Dorsolateral prefrontal cortex (tissue), 120 donors: ENCODE measurements at regions of chr15 and their contacts with region 1.

Region 1: DNA sequence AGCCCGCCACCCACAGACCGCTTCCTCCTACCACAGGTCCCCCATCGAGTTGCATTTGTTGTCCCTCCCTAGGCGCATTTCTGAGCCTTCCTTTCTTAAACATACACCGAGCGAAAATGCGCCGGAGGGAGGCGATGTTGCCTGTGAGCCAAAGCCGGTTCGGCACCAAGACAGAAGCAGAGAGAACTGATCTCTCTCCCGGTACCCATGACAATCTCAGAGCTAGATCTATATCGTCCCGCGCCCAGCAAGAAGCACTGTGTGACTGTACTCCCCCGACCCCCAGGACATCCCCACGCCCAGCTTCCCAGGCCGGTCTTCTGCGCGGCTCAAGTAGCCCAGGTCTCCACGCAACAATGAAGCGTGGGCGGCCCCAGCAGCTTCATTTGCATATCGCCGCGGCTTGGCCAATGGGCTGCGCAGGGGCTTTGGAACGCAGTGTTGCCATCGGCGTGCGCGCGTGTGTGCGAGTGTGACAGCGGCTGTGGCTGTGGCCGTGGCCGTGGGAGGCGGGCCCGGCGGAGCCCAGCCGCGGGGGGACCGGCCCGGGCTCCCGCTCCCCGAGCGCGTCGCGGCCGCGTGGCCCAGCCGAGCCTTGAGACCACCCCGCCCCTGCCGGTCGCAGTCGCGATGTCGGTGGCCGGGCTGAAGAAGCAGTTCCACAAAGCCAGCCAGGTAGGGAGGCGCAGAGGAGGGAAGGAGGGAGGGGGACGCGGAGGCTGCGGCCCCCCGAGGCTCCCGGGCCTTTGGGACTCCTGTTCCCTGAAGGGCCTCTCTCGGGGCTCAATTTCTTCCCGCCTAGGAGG is at the start of gene SH3GL3:
- DNase-seq: peak; percentile 90 to 96 (median 94)
- H3K4me3 ChIP-seq: peak within 1 kb of the TSS; percentile 59 to 96 (median 82)
- H3K27ac ChIP-seq: peak within 1 kb of the TSS; percentile 49 to 98 (median 94)
- H3K27me3 ChIP-seq: peaks cover 0 to 7% (median 0%) of the 10 kb centered on the region in 45 donors
- CTCF ChIP-seq: peak in 55 of 56 donors; percentile 55 to 86 (median 73)
- total RNA-seq, gene SH3GL3: 52.3 to 210 (median 91.0) TPM

Region 2: GRCh38 chr15:83372420-83372891 is 74.7 kb before region 1 on chr15:
- intact Hi-C with region 1: no loop called
- DNase-seq: peak in 3 of 10 donors; percentile 16 to 47 (median 36)
- H3K4me3 ChIP-seq: no peak overlapping the region
- H3K27ac ChIP-seq: no peak overlapping the region
- H3K27me3 ChIP-seq: peaks cover 0 to 63% (median 32%) of the 10 kb centered on the region in 45 donors
- CTCF ChIP-seq: peak in 4 of 56 donors; percentile 5 to 18 (median 9)

Region 3: GRCh38 chr15:83475551-83475950 is 28.4 kb after region 1 on chr15:
- intact Hi-C with region 1: no loop called
- DNase-seq: no peak
- H3K4me3 ChIP-seq: no peak overlapping the region
- H3K27ac ChIP-seq: peak overlapping the region in 50 of 59 donors; percentile 5 to 95 (median 78)
- H3K27me3 ChIP-seq: no peaks in the 10 kb centered on the region
- CTCF ChIP-seq: no peak

Region 4: DNA sequence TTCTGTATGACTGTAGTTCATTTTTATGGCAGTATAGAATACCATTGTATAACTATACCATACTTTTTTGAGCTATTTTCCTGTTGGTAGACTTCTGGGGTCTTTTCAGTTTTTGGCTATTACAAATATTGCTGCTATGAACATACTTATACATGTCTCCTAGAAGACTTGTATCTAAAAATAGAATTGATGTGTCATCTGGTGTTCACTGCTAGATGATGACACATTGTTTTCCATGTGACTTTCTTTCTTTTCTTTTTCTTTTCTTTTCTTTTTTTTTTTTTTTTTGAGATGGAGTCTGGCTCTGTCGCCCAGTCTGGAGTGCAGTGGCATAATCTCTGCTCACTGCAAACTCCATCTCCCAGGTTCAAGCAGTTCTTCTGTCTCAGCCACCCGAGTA is 69.8 kb after region 1 on chr15:
- intact Hi-C with region 1: loop called (anchors 5 to 10 kb)
- DNase-seq: no peak
- H3K4me3 ChIP-seq: no peak overlapping the region
- H3K27ac ChIP-seq: peak overlapping the region in 47 of 59 donors; percentile 0 to 98 (median 67)
- H3K27me3 ChIP-seq: no peaks in the 10 kb centered on the region
- CTCF ChIP-seq: no peak

Region 5: DNA sequence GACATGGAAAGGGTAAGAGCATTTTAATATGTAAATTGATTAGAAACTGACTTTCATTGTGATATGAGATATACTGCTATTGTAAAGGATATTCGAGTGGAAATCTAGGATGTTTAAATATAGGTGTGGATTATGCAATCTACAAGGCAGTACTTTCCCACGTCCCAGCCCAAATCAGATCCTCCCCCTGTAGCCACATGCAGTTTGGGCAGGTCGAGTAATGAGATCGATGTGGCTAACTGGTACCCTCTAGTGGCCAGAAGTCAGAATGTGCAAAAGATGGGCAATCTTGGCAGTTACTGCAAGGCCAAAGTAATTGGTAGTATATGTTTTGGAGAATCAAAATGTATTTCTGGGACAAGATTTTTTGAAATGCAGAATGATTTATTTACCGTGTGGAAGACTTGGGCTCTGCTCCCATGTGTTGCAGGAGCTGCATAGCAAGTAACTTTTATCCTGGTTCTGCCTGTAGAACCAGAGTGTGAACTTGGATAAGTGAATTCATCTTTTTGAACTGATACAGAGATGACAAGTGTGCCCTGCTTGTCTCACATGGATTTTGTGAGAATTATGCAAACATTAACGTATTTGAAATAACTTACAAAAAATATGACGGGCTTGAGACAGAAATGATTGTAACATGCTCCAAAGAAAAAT is 112.3 kb after region 1 on chr15:
- intact Hi-C with region 1: loop called (anchors 1 to 2 kb)
- DNase-seq: peak in 9 of 10 donors; percentile 61 to 86 (median 70)
- H3K4me3 ChIP-seq: peak overlapping the region in 12 of 59 donors; percentile 2 to 33 (median 15)
- H3K27ac ChIP-seq: peak overlapping the region in 52 of 59 donors; percentile 1 to 99 (median 64)
- H3K27me3 ChIP-seq: no peaks in the 10 kb centered on the region
- CTCF ChIP-seq: peak; percentile 73 to 97 (median 91)

Region 6: GRCh38 chr15:83653639-83654378 is 206.7 kb after region 1 on chr15 and contains the start of gene ADAMTSL3:
- intact Hi-C with region 1: loop called in 1 of 2 experiments (anchors 5 kb)
- DNase-seq: peak in 9 of 10 donors; percentile 20 to 76 (median 55)
- H3K4me3 ChIP-seq: peak within 1 kb of the TSS; percentile 20 to 70 (median 50)
- H3K27ac ChIP-seq: peak within 1 kb of the TSS in 2 of 59 donors; percentile 21 to 22
- H3K27me3 ChIP-seq: peaks cover 0 to 18% (median 4%) of the 10 kb centered on the region in 45 donors
- CTCF ChIP-seq: peak in 7 of 56 donors; percentile 8 to 33 (median 10)
- total RNA-seq, gene ADAMTSL3: 4.8 to 31.9 (median 12.7) TPM

Region 7: GRCh38 chr15:84035399-84035766 is 588.3 kb after region 1 on chr15:
- intact Hi-C with region 1: loop called in 1 of 2 experiments (anchors 5 kb)
- DNase-seq: no peak
- H3K4me3 ChIP-seq: no peak overlapping the region
- H3K27ac ChIP-seq: no peak overlapping the region
- H3K27me3 ChIP-seq: no peaks in the 10 kb centered on the region
- CTCF ChIP-seq: peak in 53 of 56 donors; percentile 22 to 64 (median 46)